Activated T-helper 1 cell treated with anti-CD3 and anti-CD28 coated beads, Interleukin-12 subunit alpha, Interleukin-12 subunit beta, Interleukin-2, Interleukin-4 antibody, amounts not matched to agents 30 ng/mL and 10 ng/mL and 1 ng/mL, durations not matched to agents 14 hours and 24 hours and 36 hours (primary cell): ENCODE measurements at regions of chr3 and their contacts with region 1.

Region 1: DNA sequence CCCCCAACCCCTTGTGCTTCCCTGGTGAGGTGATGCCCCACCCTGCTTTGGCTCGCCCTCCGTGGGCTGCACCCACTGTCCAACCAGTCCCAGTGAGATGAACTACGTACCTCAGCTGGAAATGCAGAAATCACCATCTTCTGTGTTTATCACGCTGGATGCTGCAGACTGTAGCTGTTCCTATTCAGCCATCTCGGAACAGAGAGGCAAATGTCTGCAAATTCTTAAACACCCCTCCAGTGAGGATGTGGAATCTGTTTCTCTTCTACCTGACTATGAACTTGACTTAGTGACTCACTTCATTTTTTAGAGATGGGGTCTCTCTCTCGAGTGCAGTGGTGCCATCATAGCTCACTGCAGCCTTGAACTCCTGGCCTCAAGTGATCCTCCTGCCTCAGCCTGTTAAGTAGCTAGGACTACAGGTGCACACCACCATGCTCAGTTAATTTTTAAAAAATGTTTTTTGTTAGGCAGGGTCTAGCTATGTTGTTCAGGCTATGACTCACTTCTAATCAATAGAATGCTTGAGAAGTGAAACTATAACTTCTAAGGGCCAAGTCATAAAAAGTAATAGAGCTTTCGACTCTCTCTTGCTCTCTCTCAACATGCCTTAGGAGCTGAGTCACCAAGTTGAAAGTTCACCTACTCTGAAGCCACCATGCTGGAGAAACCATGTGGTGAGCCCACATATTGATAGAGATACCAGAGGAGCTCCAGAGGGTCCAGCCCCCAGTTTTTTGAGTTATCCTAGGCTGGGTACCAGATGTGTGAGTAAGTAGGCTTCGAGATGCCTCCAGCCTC is 11.5 kb upstream of the PARP14 start:
- DNase-seq: no peak
- H3K4me3 Mint-ChIP-seq: no peak overlapping the region
- H3K27ac Mint-ChIP-seq: peak overlapping the region; percentile 80
- H3K4me1 Mint-ChIP-seq: peaks cover 14% of the 10 kb centered on the region
- H3K27me3 Mint-ChIP-seq: peaks cover 2% of the 10 kb centered on the region

Region 2: DNA sequence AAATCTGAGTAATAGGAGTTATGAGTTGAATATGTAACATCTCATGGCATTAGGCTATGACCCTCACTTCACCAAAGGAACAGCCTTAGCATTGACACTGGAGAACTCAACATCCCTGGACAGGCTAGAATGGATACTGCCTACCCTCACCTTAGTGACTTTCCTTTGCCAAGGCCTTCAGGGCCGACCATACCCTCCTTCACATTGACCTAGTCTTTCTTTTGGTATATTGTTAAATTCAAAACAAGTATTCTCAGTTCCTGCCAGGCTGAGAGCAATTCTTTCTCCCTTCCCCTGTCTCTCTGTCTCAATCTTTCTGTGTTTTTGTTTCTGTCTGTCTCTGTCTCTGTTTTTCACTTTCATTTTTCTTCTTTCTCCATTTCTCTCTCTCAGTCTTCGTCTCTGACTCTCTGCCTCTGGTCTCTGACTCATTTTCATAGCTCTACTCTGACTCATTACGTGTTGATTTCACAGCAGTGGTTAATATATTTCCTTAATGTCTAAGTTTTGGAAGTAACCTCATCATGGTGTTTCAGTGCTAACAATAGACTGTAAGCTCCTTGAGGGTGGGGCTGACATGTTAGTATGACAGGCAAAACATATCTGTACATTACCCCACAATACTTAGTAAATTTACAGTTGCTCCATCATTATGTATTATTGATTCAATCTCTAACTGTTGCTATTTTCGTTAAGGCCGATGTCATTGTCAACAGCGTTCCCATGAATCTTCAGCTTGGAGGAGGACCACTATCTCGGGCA is 59.2 kb before region 1 on chr3:
- intact Hi-C with region 1: loop called (anchors 1 kb)
- DNase-seq: peak; percentile 31
- H3K4me3 Mint-ChIP-seq: peak overlapping the region; percentile 58
- H3K27ac Mint-ChIP-seq: peak overlapping the region; percentile 89
- H3K4me1 Mint-ChIP-seq: peaks cover 20% of the 10 kb centered on the region
- H3K27me3 Mint-ChIP-seq: no peaks in the 10 kb centered on the region

Region 3: GRCh38 chr3:123008840-123009239 is 339.7 kb after region 1 on chr3:
- intact Hi-C with region 1: no loop called
- DNase-seq: no peak
- H3K4me3 Mint-ChIP-seq: no peak overlapping the region
- H3K27ac Mint-ChIP-seq: no peak overlapping the region
- H3K4me1 Mint-ChIP-seq: no peaks in the 10 kb centered on the region
- H3K27me3 Mint-ChIP-seq: peaks cover 36% of the 10 kb centered on the region